HAP-1 (cell line): ENCODE measurements at regions of chr2 and their contacts with region 1.

Region 1: GRCh38 chr2:85737481-85737880 is 16.3 kb upstream of the ATOH8 start:
- DNase-seq: no peak
- H3K4me3 ChIP-seq: no peak overlapping the region
- H3K4me1 ChIP-seq: no peaks in the 10 kb centered on the region
- H3K27me3 ChIP-seq: peaks cover 5% of the 10 kb centered on the region; the same call in 1 of the 2 replicates

Region 2: GRCh38 chr2:85437488-85438284 is 299.8 kb before region 1 on chr2:
- in situ Hi-C with region 1: no loop called
- DNase-seq: peak; percentile 75 to 86
- H3K4me3 ChIP-seq: peak overlapping the region; percentile 29
- H3K4me1 ChIP-seq: peaks cover 15% of the 10 kb centered on the region
- H3K27me3 ChIP-seq: no peaks in the 10 kb centered on the region

Region 3: DNA sequence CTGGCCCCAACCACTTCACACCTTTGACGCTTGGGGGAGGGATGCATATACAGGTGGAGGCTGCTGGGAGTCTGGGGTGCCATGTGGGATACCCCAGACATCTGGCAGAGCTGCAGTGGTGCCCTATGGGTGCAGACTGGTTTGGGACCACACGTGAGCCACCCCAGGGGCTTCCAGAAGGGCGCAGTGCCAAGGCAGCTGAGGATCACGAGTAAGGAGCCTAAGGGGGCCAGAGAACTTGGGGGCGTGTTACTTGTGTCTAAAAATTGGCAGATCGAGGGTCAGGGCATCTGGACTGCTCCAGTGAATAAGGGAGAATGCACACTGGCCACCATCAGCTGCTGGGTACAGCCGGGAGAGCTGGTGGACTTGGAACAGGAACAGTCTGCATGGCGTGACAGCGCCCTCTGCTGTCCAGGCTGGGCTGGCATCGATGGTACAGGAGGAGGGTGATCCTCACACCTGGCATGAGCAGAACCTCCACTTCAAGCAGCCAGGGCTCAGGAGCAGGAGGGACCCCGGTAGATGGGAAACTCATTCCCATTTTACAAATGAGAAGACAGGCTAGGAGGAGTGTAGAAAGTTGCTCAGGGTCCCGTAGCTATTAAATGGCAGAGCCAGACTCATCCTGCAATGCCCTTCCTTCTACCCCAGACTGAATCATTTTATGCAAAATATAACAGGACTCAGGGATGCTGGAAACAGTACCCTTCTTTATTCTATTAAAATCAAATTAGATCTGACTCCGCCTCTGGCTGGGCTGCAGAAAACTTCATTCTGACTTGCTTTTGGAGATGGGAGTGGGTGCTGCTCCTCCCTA is 76.7 kb after region 1 on chr2:
- in situ Hi-C with region 1: loop called (anchors 5 kb)
- DNase-seq: peak; percentile 54 to 92
- H3K4me3 ChIP-seq: no peak overlapping the region
- H3K4me1 ChIP-seq: no peaks in the 10 kb centered on the region
- H3K27me3 ChIP-seq: no peaks in the 10 kb centered on the region

Region 4: GRCh38 chr2:86556198-86556899 is 818.9 kb after region 1 on chr2:
- in situ Hi-C with region 1: no loop called
- DNase-seq: peak in 1 of 2 experiments; percentile 32
- H3K4me3 ChIP-seq: no peak overlapping the region
- H3K4me1 ChIP-seq: peaks cover 5% of the 10 kb centered on the region; the same call in 1 of the 2 replicates
- H3K27me3 ChIP-seq: no peaks in the 10 kb centered on the region